PC-3 (cell line): ENCODE measurements at regions of chr19 and their contacts with region 1.

Region 1: GRCh38 chr19:57410877-57411671 is at the start of gene ZNF17:
- DNase-seq: peak; percentile 97
- ATAC-seq: peak; percentile 100
- H3K4me3 ChIP-seq: peak within 1 kb of the TSS; percentile 96
- H3K27ac ChIP-seq: no peak within 1 kb of the TSS
- H3K4me1 ChIP-seq: peaks cover 5% of the 10 kb centered on the region; the same call in 1 of the 2 replicates
- H3K27me3 ChIP-seq: no peaks in the 10 kb centered on the region
- CTCF ChIP-seq: no peak
- total RNA-seq, gene ZNF17: 4.7 and 7.8 TPM in 2 replicates

Region 2: DNA sequence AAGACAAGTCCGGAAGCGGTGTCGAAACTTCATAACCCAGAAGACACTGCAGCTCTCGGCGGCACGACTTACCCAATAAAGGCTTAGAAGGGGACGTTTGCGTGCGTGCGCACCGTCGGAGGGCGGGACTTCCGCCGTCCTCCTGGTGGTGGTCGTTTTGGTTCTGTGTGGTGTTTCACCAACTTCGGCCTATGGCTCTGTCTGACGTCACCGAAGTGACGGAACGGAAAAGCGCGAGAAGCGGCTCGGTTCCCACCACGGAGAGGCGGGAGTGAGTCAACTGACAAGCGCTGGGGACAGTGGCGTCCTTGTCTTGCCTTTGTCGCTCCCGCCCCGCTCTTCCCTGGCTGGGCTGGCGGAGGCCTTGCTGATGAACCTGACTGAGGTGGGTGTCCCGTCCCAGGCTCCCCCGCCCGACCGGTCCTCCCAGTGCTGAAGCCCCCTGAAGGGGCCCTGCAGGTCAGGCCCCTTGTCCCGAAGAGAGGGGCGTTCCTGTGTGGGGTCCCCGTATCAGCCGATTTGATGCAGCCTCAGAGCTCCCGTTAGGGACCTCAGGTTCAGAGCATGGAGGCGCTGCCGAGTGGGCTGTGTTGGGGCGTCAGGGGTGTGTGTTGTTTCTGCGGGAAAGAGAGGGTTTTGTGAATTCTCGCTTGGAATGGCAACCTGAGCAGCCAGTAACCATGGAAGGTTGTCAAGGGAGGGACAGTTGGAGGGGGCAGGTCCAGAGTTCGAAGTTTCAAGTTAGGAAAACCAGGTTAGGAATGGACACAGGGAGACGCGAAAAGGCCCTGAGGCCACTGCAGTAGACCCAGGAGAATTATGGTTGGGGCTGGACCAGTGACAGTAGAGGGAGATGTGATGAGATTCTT is 21.1 kb before region 1 on chr19 and contains the start of gene ZNF548:
- CTCF ChIA-PET with region 1: no interaction called
- POLR2A ChIA-PET with region 1: no interaction called
- intact Hi-C with region 1: loop called (anchors 1 kb)
- DNase-seq: peak; percentile 98
- ATAC-seq: peak; percentile 99
- H3K4me3 ChIP-seq: peak within 1 kb of the TSS; percentile 82
- H3K27ac ChIP-seq: peak within 1 kb of the TSS; percentile 38
- H3K4me1 ChIP-seq: peaks cover 18% of the 10 kb centered on the region
- H3K27me3 ChIP-seq: no peaks in the 10 kb centered on the region
- CTCF ChIP-seq: peak; percentile 25; the same call in 1 of the 2 replicates
- total RNA-seq, gene ZNF548: 14.4 and 21.8 TPM in 2 replicates

Region 3: DNA sequence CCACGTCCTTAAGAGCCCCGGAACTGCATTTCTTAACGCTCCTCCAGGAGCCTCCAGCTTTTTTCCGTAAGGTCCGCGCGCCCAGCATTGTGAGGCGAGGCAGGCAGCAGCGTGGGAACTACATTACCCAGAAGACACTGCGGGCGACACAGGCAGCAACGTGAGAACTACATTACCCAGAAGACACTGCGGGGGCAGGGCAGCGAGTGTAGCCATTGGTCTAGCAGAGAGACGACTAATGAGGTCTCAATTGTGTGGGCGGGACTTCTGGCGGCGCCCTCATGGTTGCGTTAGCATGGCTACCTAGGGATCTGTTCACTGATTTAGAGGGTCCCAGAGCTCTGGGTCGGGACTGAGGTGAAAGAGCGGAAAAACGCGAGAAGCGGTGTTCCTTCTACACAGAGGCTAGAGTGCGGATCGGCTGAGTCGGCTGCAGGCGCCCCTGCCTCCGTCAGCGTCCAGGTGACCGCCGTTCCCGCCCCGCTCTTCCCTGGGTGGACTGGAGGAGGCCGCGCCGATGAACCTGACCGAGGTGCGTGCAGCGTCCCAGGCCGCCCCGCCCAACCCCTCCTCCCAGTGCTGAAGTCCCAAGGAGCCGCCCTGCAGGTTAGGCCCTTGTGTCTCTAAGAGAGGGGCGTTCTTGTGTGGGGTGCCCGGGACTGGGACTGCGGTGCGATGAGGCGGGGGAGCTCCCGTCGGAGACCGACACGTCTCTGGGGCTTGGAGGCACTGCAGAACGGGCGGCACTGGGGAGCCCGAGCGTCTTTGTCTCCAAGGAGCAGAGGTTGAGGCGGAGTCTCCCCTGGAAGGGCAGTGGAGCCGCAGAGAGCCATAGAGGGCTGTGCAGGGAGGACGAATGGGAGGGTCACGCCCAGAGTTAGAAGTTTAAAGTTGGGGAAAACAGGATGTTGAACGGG is 24.2 kb after region 1 on chr19 and contains the start of gene ZNF749:
- CTCF ChIA-PET with region 1: no interaction called
- POLR2A ChIA-PET with region 1: no interaction called
- intact Hi-C with region 1: loop called (anchors 1 kb)
- DNase-seq: peak; percentile 100
- ATAC-seq: peak; percentile 96
- H3K4me3 ChIP-seq: peak within 1 kb of the TSS; percentile 88
- H3K27ac ChIP-seq: peak within 1 kb of the TSS; percentile 34
- H3K4me1 ChIP-seq: peaks cover 14% of the 10 kb centered on the region
- H3K27me3 ChIP-seq: no peaks in the 10 kb centered on the region
- CTCF ChIP-seq: no peak
- total RNA-seq, gene ZNF749: 17.6 and 21.9 TPM in 2 replicates

Region 4: GRCh38 chr19:57769345-57770131 is 358.5 kb after region 1 on chr19 and contains the start of gene ZNF586:
- CTCF ChIA-PET with region 1: no interaction called
- POLR2A ChIA-PET with region 1: no interaction called
- intact Hi-C with region 1: loop called (anchors 1 kb)
- DNase-seq: peak; percentile 96
- ATAC-seq: peak; percentile 99
- H3K4me3 ChIP-seq: peak within 1 kb of the TSS; percentile 68
- H3K27ac ChIP-seq: peak within 1 kb of the TSS; percentile 28
- H3K4me1 ChIP-seq: peaks cover 6% of the 10 kb centered on the region
- H3K27me3 ChIP-seq: no peaks in the 10 kb centered on the region
- CTCF ChIP-seq: no peak
- total RNA-seq, gene ZNF586: 13.1 and 13.2 TPM in 2 replicates

Region 5: GRCh38 chr19:58154679-58155648 is 743.9 kb after region 1 on chr19:
- CTCF ChIA-PET with region 1: no interaction called
- POLR2A ChIA-PET with region 1: no interaction called
- intact Hi-C with region 1: loop called (anchors 5 kb)
- DNase-seq: peak; percentile 89
- ATAC-seq: peak; percentile 83
- H3K4me3 ChIP-seq: peak overlapping the region; percentile 77
- H3K27ac ChIP-seq: no peak overlapping the region
- H3K4me1 ChIP-seq: no peaks in the 10 kb centered on the region
- H3K27me3 ChIP-seq: no peaks in the 10 kb centered on the region
- CTCF ChIP-seq: peak; percentile 82